Activated CD8-positive, alpha-beta T cell treated with anti-CD3 and anti-CD28 coated beads for 36 hours (primary cell): ENCODE measurements at regions of chr2 and their contacts with region 1.

Region 1: GRCh38 chr2:170324640-170325046 is 146.7 kb downstream of the MYO3B start:
- DNase-seq: peak; percentile 39
- ATAC-seq: peak; percentile 72
- H3K4me3 Mint-ChIP-seq: no peak overlapping the region
- H3K27ac Mint-ChIP-seq: no peak overlapping the region
- H3K4me1 Mint-ChIP-seq: no peaks in the 10 kb centered on the region
- H3K27me3 Mint-ChIP-seq: peaks cover 2% of the 10 kb centered on the region
- CTCF ChIP-seq: peak; percentile 62

Region 2: DNA sequence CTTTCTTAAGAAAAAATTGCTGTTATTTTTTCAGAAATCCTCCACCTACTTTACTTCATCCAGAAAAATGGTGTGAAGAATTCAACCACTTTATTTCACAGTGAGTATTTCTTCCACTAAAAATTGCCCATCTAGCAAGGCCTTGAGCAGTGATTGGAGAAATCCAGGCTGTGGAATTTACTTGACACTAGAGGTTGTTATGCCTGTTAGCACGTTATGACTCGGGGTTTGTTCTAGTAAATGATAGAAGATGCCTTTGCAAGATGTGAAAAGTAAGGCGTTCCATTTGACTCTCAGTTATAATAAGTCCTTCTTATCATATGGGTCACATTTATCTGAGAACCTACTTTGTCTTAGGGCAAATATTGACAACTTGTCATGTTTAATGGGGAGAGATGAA is 10.7 kb after region 1 on chr2:
- CTCF ChIA-PET with region 1: interaction called, 10 read pairs
- POLR2A ChIA-PET with region 1: no interaction called
- intact Hi-C with region 1: no loop called
- DNase-seq: no peak
- ATAC-seq: no peak
- H3K4me3 Mint-ChIP-seq: no peak overlapping the region
- H3K27ac Mint-ChIP-seq: no peak overlapping the region
- H3K4me1 Mint-ChIP-seq: peaks cover 6% of the 10 kb centered on the region
- H3K27me3 Mint-ChIP-seq: peaks cover 7% of the 10 kb centered on the region
- CTCF ChIP-seq: no peak

Region 3: GRCh38 chr2:170369894-170370293 is 45.3 kb after region 1 on chr2:
- CTCF ChIA-PET with region 1: interaction called, 11 read pairs
- POLR2A ChIA-PET with region 1: no interaction called
- intact Hi-C with region 1: no loop called
- DNase-seq: no peak
- ATAC-seq: no peak
- H3K4me3 Mint-ChIP-seq: no peak overlapping the region
- H3K27ac Mint-ChIP-seq: no peak overlapping the region
- H3K4me1 Mint-ChIP-seq: peaks cover 37% of the 10 kb centered on the region
- H3K27me3 Mint-ChIP-seq: peaks cover 38% of the 10 kb centered on the region
- CTCF ChIP-seq: peak; percentile 56

Region 4: DNA sequence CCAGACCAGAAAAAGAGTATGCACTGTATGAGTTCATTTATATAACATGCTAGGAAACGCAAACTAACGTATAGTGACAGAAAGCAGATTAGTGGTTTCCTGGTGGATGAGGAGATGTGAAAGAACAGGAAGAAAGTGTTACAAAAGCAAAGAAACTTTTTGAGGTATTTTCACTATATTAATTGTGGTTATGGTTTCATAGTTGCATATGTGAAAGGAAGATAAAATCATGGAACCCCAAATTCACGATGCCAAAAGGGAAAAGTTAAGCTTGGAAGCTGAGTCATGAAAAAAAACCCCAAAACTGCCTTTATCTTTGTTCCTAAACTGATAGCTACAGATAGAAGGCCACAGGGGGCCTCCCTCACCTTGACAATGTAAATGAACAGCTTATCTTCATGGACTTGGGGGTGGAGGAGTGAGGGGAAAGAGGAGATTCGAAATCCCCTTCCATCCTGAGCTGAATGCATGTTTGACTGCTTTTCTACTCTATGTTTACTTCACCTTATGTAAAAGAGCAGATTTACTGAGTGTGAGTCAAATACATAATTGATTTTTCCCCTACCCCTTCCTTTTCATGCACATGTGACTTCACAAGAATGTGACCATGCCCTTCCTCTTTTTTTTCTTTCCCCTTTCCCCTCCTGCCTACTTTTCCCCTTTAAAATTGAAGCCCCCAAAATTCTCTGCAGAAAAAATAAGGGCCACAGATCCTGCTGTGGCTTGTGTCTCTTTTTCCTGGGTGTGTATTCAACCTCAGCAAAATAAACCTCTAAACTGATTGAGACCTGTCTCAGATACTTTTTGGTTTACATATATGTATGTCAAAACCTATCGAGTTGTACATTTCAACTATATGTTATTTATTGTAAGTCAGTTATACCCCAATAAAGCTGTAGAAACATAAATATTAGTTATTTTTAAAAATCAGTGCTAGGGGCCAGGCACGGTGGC is 936.1 kb after region 1 on chr2:
- CTCF ChIA-PET with region 1: no interaction called
- POLR2A ChIA-PET with region 1: no interaction called
- intact Hi-C with region 1: no loop called
- DNase-seq: peak; percentile 45
- ATAC-seq: peak; percentile 86
- H3K4me3 Mint-ChIP-seq: no peak overlapping the region
- H3K27ac Mint-ChIP-seq: peak overlapping the region; percentile 50
- H3K4me1 Mint-ChIP-seq: peaks cover 25% of the 10 kb centered on the region
- H3K27me3 Mint-ChIP-seq: no peaks in the 10 kb centered on the region
- CTCF ChIP-seq: no peak